Heart left ventricle (tissue), 16 donors: ENCODE measurements at regions of chr17 and their contacts with region 1.

Region 1: GRCh38 chr17:64728041-64728751 is 66.1 kb upstream of the SMURF2 start:
- DNase-seq: peak in 1 of 5 donors; percentile 28
- ATAC-seq: peak in 1 of 4 donors; percentile 43
- H3K4me3 ChIP-seq: no peak overlapping the region
- H3K27ac ChIP-seq: peak overlapping the region in 2 of 12 donors; percentile 5 to 51
- H3K4me1 ChIP-seq: peaks cover 0 to 31% (median 17%) of the 10 kb centered on the region in 12 donors
- H3K27me3 ChIP-seq: no peaks in the 10 kb centered on the region
- CTCF ChIP-seq: no peak
- POLR2A ChIP-seq: no peak

Region 2: GRCh38 chr17:64661976-64662773 is 66.0 kb before region 1 on chr17 and contains the start of gene SMURF2:
- intact Hi-C with region 1: loop called in 4 of 10 experiments (anchors 5 to 10 kb)
- DNase-seq: peak; percentile 83 to 91 (median 86)
- ATAC-seq: peak; percentile 83 to 98 (median 92)
- H3K4me3 ChIP-seq: peak within 1 kb of the TSS; percentile 55 to 93 (median 80)
- H3K27ac ChIP-seq: peak within 1 kb of the TSS; percentile 84 to 97 (median 94)
- H3K4me1 ChIP-seq: peaks cover 0 to 43% (median 19%) of the 10 kb centered on the region in 12 donors
- H3K27me3 ChIP-seq: no peaks in the 10 kb centered on the region
- CTCF ChIP-seq: peak in 2 of 12 donors; percentile 16 to 31
- POLR2A ChIP-seq: peak; percentile 90 to 95
- total RNA-seq, gene SMURF2: 8.7 to 17.5 (median 12.6) TPM